Activated CD4-positive, alpha-beta T cell treated with anti-CD3 and anti-CD28 coated beads for 36 hours (primary cell): ENCODE measurements at regions of chr12 and their contacts with region 1.

Region 1: GRCh38 chr12:13085968-13086686 is 17.3 kb downstream of the GSG1 start:
- DNase-seq: no peak
- ATAC-seq: no peak
- H3K4me3 Mint-ChIP-seq: no peak overlapping the region
- H3K27ac Mint-ChIP-seq: no peak overlapping the region
- H3K4me1 Mint-ChIP-seq: peaks cover 11% of the 10 kb centered on the region
- H3K27me3 Mint-ChIP-seq: no peaks in the 10 kb centered on the region

Region 2: GRCh38 chr12:12922191-12922616 is 163.9 kb before region 1 on chr12:
- CTCF ChIA-PET with region 1: no interaction called
- POLR2A ChIA-PET with region 1: no interaction called
- intact Hi-C with region 1: loop called in 1 of 2 experiments (anchors 5 kb)
- DNase-seq: no peak
- ATAC-seq: no peak
- H3K4me3 Mint-ChIP-seq: no peak overlapping the region
- H3K27ac Mint-ChIP-seq: no peak overlapping the region
- H3K4me1 Mint-ChIP-seq: no peaks in the 10 kb centered on the region
- H3K27me3 Mint-ChIP-seq: peaks cover 6% of the 10 kb centered on the region